Adrenal gland (tissue), 19 donors: ENCODE measurements at regions of chr6 and their contacts with region 1.

Region 1: GRCh38 chr6:150813319-150813992 is 52.0 kb upstream of the MTHFD1L start:
- DNase-seq: no peak
- H3K4me3 ChIP-seq: no peak overlapping the region
- H3K27ac ChIP-seq: peak overlapping the region in 1 of 5 donors; percentile 22
- H3K4me1 ChIP-seq: no peaks in the 10 kb centered on the region
- H3K27me3 ChIP-seq: no peaks in the 10 kb centered on the region
- CTCF ChIP-seq: no peak
- POLR2A ChIP-seq: no peak

Region 2: GRCh38 chr6:150072201-150072600 is 741.3 kb before region 1 on chr6:
- intact Hi-C with region 1: loop called in 1 of 2 experiments (anchors 10 kb)
- DNase-seq: peak; percentile 82 to 96 (median 91)
- H3K4me3 ChIP-seq: no peak overlapping the region
- H3K27ac ChIP-seq: no peak overlapping the region
- H3K4me1 ChIP-seq: peaks cover 0 to 6% of the 10 kb centered on the region in 2 donors
- H3K27me3 ChIP-seq: no peaks in the 10 kb centered on the region
- CTCF ChIP-seq: no peak
- POLR2A ChIP-seq: no peak

Region 3: GRCh38 chr6:150417899-150418826 is 395.3 kb before region 1 on chr6:
- intact Hi-C with region 1: loop called (anchors 2 to 5 kb)
- DNase-seq: peak in 5 of 7 donors; percentile 27 to 60 (median 42)
- H3K4me3 ChIP-seq: peak overlapping the region in 2 of 4 donors; percentile 13 to 42
- H3K27ac ChIP-seq: peak overlapping the region in 2 of 5 donors; percentile 37 to 45
- H3K4me1 ChIP-seq: no peaks in the 10 kb centered on the region
- H3K27me3 ChIP-seq: no peaks in the 10 kb centered on the region
- CTCF ChIP-seq: peak; percentile 54 to 80 (median 74)
- POLR2A ChIP-seq: no peak